AG04449 (cell line): ENCODE measurements at regions of chr10 and their contacts with region 1.

Region 1: DNA sequence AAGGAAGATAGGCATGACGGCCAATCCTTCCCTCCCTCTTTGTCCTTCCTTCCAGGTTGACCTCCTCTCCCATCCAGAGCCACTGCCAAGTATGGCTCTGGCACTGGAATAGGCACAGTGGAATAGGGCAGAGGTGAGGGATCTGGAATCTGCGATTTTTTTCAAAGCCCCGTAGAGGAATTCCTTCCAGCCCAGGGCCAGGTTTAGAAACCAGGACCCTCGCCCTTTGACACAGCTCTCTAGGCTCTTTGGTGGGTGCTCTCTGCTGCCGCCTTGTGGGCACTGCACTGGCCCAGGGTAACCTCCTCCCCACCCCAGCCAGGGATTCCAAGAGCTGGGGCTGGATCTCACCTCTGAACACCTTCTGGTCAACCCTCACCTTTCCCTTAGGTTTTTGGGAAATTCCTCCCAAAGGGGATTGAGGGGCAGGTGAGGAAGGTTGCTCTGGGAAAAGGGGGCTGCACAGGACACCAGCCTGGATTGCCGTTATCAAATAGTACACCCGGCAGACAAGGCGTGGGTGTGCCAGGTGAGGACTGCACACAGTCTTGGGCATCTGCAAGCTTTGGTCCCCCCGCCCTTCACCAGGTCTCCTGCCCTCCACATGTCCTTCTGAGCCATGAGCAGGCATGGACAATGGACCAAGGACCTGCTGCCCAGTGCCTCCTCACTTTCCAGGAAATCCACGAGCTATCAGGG is 22.8 kb downstream of the C10orf105 start:
- DNase-seq: no peak
- H3K4me3 ChIP-seq: no peak overlapping the region
- CTCF ChIP-seq: peak; percentile 81

Region 2: GRCh38 chr10:71383972-71384687 is 312.6 kb before region 1 on chr10:
- CTCF ChIA-PET with region 1: interaction called, 10 read pairs
- POLR2A ChIA-PET with region 1: no interaction called
- DNase-seq: no peak
- H3K4me3 ChIP-seq: no peak overlapping the region
- CTCF ChIP-seq: peak; percentile 97

Region 3: GRCh38 chr10:71684356-71685173 is 12.2 kb before region 1 on chr10:
- CTCF ChIA-PET with region 1: interaction called, 38 read pairs
- POLR2A ChIA-PET with region 1: no interaction called
- DNase-seq: no peak
- H3K4me3 ChIP-seq: no peak overlapping the region
- CTCF ChIP-seq: no peak

Region 4: GRCh38 chr10:71713135-71714030 is 16.6 kb after region 1 on chr10:
- CTCF ChIA-PET with region 1: interaction called, 73 read pairs
- POLR2A ChIA-PET with region 1: no interaction called
- DNase-seq: peak; percentile 4
- H3K4me3 ChIP-seq: no peak overlapping the region
- CTCF ChIP-seq: peak; percentile 20

Region 5: GRCh38 chr10:71812016-71812912 is 115.5 kb after region 1 on chr10:
- CTCF ChIA-PET with region 1: interaction called, 19 read pairs
- POLR2A ChIA-PET with region 1: no interaction called
- DNase-seq: no peak
- H3K4me3 ChIP-seq: no peak overlapping the region
- CTCF ChIP-seq: peak; percentile 93

Region 6: GRCh38 chr10:71878327-71879034 is 181.7 kb after region 1 on chr10:
- CTCF ChIA-PET with region 1: no interaction called
- POLR2A ChIA-PET with region 1: no interaction called
- DNase-seq: no peak
- H3K4me3 ChIP-seq: no peak overlapping the region
- CTCF ChIP-seq: no peak